IMR-90 (cell line): ENCODE measurements at regions of chr3 and their contacts with region 1.

Region 1: GRCh38 chr3:13452490-13453335 is 27.4 kb upstream of the HDAC11 start:
- DNase-seq: peak; percentile 53
- ATAC-seq: peak; percentile 43; the same call in 1 of the 2 replicates
- H3K4me3 ChIP-seq: no peak overlapping the region
- H3K27ac ChIP-seq: no peak overlapping the region
- H3K4me1 ChIP-seq: peaks cover 3% of the 10 kb centered on the region; the same call in 1 of the 2 replicates
- H3K27me3 ChIP-seq: peaks cover 3% of the 10 kb centered on the region; the same call in 1 of the 2 replicates
- CTCF ChIP-seq: peak; percentile 66
- POLR2A ChIP-seq: no peak
- RAD21 ChIP-seq: peak; percentile 70

Region 2: GRCh38 chr3:13308380-13308801 is 144.3 kb before region 1 on chr3:
- CTCF ChIA-PET with region 1: no interaction called
- POLR2A ChIA-PET with region 1: no interaction called
- dilution Hi-C with region 1: no loop called
- in situ Hi-C with region 1: no loop called
- intact Hi-C with region 1: loop called (anchors 10 kb)
- DNase-seq: peak; percentile 38
- ATAC-seq: peak; percentile 56
- H3K4me3 ChIP-seq: no peak overlapping the region
- H3K27ac ChIP-seq: no peak overlapping the region
- H3K4me1 ChIP-seq: no peaks in the 10 kb centered on the region
- H3K27me3 ChIP-seq: peaks cover 4% of the 10 kb centered on the region; the same call in 1 of the 2 replicates
- CTCF ChIP-seq: peak; percentile 33; the same call in 1 of the 2 replicates
- POLR2A ChIP-seq: no peak
- RAD21 ChIP-seq: peak; percentile 14; the same call in 1 of the 2 replicates

Region 3: GRCh38 chr3:13559764-13560525 is 107.2 kb after region 1 on chr3:
- CTCF ChIA-PET with region 1: no interaction called
- POLR2A ChIA-PET with region 1: no interaction called
- dilution Hi-C with region 1: no loop called
- in situ Hi-C with region 1: no loop called
- intact Hi-C with region 1: no loop called
- DNase-seq: no peak
- ATAC-seq: no peak
- H3K4me3 ChIP-seq: no peak overlapping the region
- H3K27ac ChIP-seq: no peak overlapping the region
- H3K4me1 ChIP-seq: no peaks in the 10 kb centered on the region
- H3K27me3 ChIP-seq: peaks cover 2% of the 10 kb centered on the region; the same call in 1 of the 2 replicates
- CTCF ChIP-seq: no peak
- POLR2A ChIP-seq: no peak
- RAD21 ChIP-seq: no peak